Activated CD4-positive, alpha-beta T cell treated with anti-CD3 and anti-CD28 coated beads for 36 hours (primary cell): ENCODE measurements at regions of chr5 and their contacts with region 1.

Region 1: DNA sequence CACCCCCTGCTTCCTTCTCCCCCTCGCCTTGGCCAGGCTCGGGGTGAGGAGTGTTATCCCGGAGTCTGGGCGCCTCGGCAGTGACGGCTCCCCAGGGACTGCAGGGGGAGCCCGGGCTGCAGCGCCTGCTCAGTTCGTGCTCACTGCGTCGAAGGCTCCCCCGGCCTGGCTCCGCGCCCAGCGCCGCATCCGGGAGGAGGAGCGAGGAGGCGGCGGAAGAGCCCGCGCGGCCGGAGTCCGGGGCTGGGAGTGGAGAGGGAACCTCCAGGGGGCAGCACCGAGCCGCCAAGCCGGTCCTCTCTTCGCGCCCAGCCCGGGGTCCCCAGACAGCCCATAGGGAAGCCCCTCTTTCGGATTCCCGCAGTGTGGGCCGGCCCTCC is 1.3 kb upstream of the EGR1 start:
- DNase-seq: peak; percentile 97
- ATAC-seq: peak; percentile 54
- H3K4me3 Mint-ChIP-seq: peak overlapping the region; percentile 77
- H3K27ac Mint-ChIP-seq: peak overlapping the region; percentile 94
- H3K4me1 Mint-ChIP-seq: peaks cover 58% of the 10 kb centered on the region
- H3K27me3 Mint-ChIP-seq: no peaks in the 10 kb centered on the region

Region 2: DNA sequence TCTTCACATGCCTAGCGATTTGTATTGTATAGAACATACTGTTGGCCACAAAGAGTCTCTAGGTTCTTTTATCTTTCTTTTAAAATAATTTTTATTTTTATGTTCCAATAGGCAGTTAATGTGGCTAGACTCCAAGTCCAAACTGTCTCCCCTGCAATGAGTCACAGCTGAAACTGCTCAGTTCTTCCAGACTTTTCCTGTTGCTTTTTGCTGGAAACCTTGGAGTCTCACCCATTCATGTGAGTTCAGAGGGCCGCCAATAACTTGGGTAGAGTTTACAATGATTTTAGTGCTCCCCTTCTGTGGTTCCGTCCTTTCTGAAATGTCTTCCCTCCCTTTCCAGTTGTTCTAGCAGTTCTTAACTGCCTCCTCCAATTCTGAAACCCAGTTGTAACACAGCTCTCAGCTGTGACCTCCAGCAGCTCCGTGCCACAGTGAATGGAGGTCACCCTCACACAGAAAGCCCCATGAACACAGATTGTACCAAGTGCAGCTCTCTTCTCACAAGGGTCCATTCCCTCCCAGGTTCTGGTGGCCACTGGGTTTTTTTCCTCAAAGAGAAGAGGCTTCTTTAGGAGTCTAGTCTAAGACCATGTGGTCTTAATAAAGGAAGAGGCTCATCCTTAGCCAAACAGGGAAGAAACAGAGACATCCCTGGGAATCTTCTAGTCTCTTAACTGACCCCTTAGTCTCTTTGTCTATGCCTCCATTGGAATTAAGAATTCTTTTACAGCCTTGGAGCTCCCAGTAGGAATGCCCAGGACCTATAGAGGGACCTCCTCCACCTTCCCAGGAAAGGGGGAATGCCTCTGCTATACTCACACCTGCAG is 1163.4 kb before region 1 on chr5:
- CTCF ChIA-PET with region 1: no interaction called
- POLR2A ChIA-PET with region 1: no interaction called
- intact Hi-C with region 1: no loop called
- DNase-seq: no peak
- ATAC-seq: no peak
- H3K4me3 Mint-ChIP-seq: no peak overlapping the region
- H3K27ac Mint-ChIP-seq: no peak overlapping the region
- H3K4me1 Mint-ChIP-seq: no peaks in the 10 kb centered on the region
- H3K27me3 Mint-ChIP-seq: peaks cover 8% of the 10 kb centered on the region

Region 3: DNA sequence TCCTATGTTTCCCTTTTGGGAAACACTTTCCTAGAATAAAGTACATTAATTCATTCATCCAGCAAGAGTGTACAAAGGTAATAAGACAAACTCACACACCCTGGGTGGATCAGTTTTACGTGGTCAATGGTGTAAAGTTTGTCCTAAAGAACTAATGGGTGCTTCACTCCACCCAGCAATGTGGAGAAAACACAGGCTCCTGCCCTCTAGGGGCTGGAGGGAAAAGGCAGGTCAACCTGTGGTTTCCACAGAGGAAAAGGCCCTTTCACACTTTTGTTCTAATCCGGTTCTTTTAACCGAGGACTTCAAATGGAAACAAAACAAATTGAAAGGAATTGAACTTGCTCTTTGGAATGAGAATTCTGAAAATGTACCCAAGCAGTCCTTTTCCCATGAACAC is 884.0 kb before region 1 on chr5:
- CTCF ChIA-PET with region 1: no interaction called
- POLR2A ChIA-PET with region 1: no interaction called
- intact Hi-C with region 1: no loop called
- DNase-seq: no peak
- ATAC-seq: no peak
- H3K4me3 Mint-ChIP-seq: no peak overlapping the region
- H3K27ac Mint-ChIP-seq: no peak overlapping the region
- H3K4me1 Mint-ChIP-seq: no peaks in the 10 kb centered on the region
- H3K27me3 Mint-ChIP-seq: peaks cover 7% of the 10 kb centered on the region

Region 4: DNA sequence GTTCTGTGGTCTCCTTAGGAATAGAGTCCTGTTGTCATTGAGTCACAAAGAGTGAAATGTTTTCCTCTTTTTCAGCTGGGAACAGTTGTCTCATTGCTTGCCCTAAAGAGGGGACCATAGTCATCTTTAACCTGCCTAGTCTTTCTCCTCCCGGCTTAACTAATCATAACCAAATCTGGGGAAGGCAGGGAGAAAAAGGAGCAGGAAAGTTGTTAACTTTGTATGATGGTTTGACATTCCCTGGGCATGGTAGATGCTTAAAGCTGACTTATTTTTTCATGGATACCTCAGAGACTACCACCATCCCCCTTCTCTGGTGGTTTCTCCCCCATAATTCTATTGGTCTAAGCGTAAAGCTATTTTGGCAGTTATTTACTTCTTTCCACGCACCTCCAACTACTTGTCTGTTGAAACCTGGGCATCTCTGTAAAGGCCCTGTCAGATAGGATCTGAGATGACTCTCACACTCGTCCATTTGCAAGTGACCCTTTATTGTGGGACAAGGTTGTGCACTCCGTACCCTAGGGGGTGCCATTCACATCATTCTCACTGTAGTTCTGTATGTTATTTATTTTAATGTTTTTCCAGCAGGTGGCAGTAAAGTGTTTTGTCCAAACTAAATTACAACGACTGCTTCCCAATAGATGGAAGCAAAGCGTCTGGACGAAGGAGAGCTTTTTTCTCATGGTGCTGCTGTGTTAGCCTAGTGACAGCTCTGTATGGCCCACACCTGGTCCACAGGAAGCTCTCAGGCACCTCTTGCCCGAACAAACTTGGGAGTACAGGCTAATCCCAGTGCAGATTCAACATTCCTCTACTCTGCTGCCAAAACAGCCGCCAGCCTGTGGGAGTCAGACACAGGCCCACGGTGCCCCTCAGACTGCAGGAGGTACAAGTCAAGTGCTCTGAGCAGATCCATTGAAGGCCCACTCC is 428.1 kb before region 1 on chr5:
- CTCF ChIA-PET with region 1: no interaction called
- POLR2A ChIA-PET with region 1: no interaction called
- intact Hi-C with region 1: loop called in 1 of 2 experiments (anchors 2 kb)
- DNase-seq: peak; percentile 74
- ATAC-seq: peak; percentile 74
- H3K4me3 Mint-ChIP-seq: no peak overlapping the region
- H3K27ac Mint-ChIP-seq: no peak overlapping the region
- H3K4me1 Mint-ChIP-seq: peaks cover 26% of the 10 kb centered on the region
- H3K27me3 Mint-ChIP-seq: no peaks in the 10 kb centered on the region

Region 5: DNA sequence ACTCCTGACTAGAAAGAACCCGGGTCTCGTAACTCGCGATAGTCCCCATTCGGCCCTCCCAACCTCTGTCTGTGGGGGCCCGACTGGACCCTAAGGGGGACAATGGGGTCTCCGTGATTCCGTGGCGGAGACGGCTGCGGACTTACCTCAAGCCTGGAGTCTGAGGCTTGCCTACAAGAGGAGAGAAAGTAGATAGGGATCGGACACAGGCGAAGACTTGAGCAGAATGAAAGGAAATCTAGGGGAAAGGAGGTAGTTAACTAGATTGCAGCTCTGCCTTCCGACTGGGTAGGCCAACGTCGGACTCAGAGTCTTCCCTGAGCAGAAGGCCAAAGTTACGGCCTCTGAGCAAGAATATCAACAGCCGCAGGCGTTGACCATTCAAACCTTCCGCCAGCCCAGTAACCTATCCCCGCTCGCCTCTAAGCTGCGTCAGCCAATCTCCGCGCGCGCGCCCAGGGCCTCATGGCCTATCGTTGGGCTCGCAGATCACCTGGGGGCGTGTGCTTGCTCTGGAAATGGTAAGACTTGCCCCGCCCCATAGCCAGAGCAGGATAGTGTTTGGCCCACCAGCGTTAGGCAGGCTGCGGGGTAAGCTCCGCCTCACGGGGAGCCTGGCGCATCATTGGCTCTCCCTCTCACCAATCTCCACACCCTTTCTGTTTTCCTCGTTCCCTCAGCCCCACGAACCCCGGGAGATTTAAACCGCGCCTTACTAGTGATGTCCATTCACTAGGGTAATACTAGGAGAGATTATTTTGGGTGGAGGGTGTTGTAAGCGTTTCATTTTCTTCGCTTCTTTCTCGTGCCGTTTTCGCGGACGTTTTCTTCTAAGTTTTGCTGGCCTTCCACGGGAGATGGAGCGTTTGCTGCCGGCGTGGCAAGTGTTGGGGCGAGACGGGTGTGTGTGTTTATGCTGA is 132.3 kb before region 1 on chr5 and contains the start of gene CDC25C:
- CTCF ChIA-PET with region 1: interaction called, 3 read pairs
- POLR2A ChIA-PET with region 1: interaction called, 4 read pairs
- intact Hi-C with region 1: loop called in 1 of 2 experiments (anchors 1 kb)
- DNase-seq: peak; percentile 98
- ATAC-seq: peak; percentile 100
- H3K4me3 Mint-ChIP-seq: peak within 1 kb of the TSS; percentile 86
- H3K27ac Mint-ChIP-seq: peak within 1 kb of the TSS; percentile 87
- H3K4me1 Mint-ChIP-seq: peaks cover 22% of the 10 kb centered on the region
- H3K27me3 Mint-ChIP-seq: no peaks in the 10 kb centered on the region
- total RNA-seq, gene CDC25C: 15.9 to 19.0 TPM

Region 6: GRCh38 chr5:138386290-138386689 is 77.7 kb before region 1 on chr5:
- CTCF ChIA-PET with region 1: no interaction called
- POLR2A ChIA-PET with region 1: no interaction called
- intact Hi-C with region 1: no loop called
- DNase-seq: no peak
- ATAC-seq: no peak
- H3K4me3 Mint-ChIP-seq: no peak overlapping the region
- H3K27ac Mint-ChIP-seq: no peak overlapping the region
- H3K4me1 Mint-ChIP-seq: no peaks in the 10 kb centered on the region
- H3K27me3 Mint-ChIP-seq: no peaks in the 10 kb centered on the region

Region 7: DNA sequence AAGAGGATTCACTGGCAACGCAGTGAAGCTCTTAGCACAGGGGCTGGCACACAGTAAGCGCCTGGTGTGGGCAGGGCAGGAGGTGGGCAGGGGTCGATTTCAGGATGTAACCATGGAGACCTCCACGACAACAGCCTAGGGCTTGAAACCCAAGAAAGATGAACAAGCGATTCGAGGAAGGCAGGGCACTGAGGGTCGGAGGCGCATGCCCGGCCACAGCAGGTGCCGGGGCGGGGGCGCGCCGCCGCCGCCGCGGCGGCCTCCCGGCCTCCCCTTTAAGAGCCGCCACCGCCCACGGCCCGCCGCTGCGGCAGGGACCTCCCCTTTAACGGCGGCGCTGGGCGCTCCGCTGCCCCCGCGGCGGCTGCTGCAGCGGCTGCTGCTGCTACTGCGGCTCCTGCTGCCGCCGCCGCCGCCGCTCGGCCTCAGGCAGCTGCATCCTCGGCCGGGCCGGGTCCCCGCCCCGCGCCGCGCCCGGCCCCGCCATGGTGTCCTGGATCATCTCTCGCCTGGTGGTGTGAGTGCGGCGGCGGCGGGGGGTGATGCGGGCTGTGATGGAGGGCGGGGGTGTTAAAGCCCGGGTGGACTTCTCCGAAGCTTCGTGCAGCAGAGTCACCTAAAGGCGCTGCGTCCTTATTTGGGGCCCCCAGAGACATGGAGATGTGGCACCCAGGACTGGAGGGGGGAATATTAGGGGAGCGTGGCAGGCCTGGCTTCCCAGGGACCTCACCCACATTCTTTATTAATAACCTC is 25.1 kb before region 1 on chr5 and contains the start of gene REEP2:
- CTCF ChIA-PET with region 1: interaction called, 9 read pairs
- POLR2A ChIA-PET with region 1: interaction called, 3 read pairs
- intact Hi-C with region 1: loop called in 1 of 2 experiments (anchors 1 kb)
- DNase-seq: peak; percentile 86
- ATAC-seq: peak; percentile 88
- H3K4me3 Mint-ChIP-seq: peak within 1 kb of the TSS; percentile 67
- H3K27ac Mint-ChIP-seq: no peak within 1 kb of the TSS
- H3K4me1 Mint-ChIP-seq: peaks cover 15% of the 10 kb centered on the region
- H3K27me3 Mint-ChIP-seq: no peaks in the 10 kb centered on the region
- total RNA-seq, gene REEP2: 4.0 to 5.6 TPM

Region 8: DNA sequence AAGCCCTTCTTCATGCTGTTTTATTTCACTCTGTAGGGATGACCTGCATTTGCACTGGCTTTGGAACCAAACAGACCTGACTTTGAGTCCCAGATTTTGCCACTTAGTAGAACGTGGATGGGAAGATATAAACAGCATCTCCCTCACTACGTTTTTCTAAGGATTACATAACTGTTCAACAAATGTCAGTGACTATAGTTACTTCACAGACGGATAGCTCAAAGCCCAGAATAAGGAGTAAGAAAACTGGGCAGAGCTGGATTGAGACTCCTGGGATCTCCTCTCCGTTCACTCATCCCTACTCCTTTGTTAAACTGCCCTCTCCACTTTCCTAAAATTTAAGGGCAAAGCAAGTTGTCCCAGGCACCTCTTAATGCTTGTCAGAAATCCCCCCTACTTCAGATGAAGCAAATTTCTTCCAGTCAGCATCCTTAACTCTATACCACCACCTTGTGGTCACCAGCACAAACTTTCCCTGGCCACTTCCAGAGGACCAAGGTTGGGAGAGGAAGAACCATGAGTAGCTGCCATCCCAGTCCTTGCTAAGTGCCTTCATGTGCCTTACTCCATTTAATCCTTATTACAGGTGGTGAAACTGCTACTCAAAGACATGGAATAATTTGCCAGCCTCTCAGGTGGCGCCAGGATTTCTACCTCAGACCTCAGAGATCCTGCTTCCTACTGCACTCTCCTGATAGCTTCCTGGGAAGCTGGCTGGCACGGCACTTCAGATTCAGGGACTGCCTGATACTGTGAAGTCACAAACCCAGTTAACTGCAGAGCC is 39.7 kb after region 1 on chr5:
- CTCF ChIA-PET with region 1: interaction called, 14 read pairs
- POLR2A ChIA-PET with region 1: interaction called, 8 read pairs
- intact Hi-C with region 1: loop called in 1 of 2 experiments (anchors 1 kb)
- DNase-seq: peak; percentile 44
- ATAC-seq: peak; percentile 79
- H3K4me3 Mint-ChIP-seq: no peak overlapping the region
- H3K27ac Mint-ChIP-seq: no peak overlapping the region
- H3K4me1 Mint-ChIP-seq: no peaks in the 10 kb centered on the region
- H3K27me3 Mint-ChIP-seq: no peaks in the 10 kb centered on the region

Region 9: DNA sequence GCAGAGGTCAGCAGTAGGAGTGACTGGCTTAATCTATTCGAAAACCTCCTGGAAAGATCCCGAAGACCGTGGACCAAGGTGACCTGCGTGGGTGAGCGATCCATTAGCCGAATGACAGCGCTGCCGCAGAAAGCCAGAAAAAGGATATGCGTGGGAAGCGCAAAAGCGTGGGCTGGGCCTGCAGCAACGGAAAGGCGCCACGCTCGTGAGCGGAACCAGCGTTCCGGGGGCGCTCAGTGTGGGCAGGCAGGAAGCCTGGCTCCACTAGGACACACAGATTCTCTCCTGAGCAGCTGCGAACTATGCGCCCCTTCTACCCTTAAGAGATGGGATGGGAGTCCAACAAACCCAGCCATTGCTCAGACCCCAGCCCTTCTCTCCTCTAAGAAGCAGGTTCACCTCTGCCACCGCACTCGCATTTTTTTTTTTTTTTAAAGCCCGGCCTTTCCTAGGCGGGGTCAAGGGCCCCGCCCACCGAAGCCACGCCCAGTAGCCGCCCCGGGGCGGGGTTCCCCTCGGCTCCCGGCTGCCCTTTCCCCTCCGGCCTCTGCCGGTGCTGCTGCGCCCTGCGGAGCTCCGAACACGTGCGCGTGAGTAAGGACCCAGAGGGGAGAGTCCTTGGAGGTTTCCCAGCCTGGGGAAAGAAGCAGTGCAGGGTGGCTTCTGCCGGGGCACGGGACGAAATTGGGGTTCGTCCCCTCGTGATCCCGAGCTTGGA is 809.7 kb after region 1 on chr5:
- CTCF ChIA-PET with region 1: no interaction called
- POLR2A ChIA-PET with region 1: no interaction called
- intact Hi-C with region 1: loop called in 1 of 2 experiments (anchors 10 kb)
- DNase-seq: peak; percentile 95
- ATAC-seq: peak; percentile 90
- H3K4me3 Mint-ChIP-seq: peak overlapping the region; percentile 95
- H3K27ac Mint-ChIP-seq: peak overlapping the region; percentile 88
- H3K4me1 Mint-ChIP-seq: peaks cover 54% of the 10 kb centered on the region
- H3K27me3 Mint-ChIP-seq: no peaks in the 10 kb centered on the region

Region 10: GRCh38 chr5:139403787-139404483 is 939.9 kb after region 1 on chr5 and contains the start of gene SPATA24:
- CTCF ChIA-PET with region 1: no interaction called
- POLR2A ChIA-PET with region 1: no interaction called
- intact Hi-C with region 1: loop called in 1 of 2 experiments (anchors 1 kb)
- DNase-seq: peak; percentile 100
- ATAC-seq: peak; percentile 93
- H3K4me3 Mint-ChIP-seq: peak within 1 kb of the TSS; percentile 79
- H3K27ac Mint-ChIP-seq: peak within 1 kb of the TSS; percentile 99
- H3K4me1 Mint-ChIP-seq: peaks cover 37% of the 10 kb centered on the region
- H3K27me3 Mint-ChIP-seq: no peaks in the 10 kb centered on the region
- total RNA-seq, gene SPATA24: 4.6 to 5.9 TPM